Activated CD8-positive, alpha-beta T cell treated with anti-CD3 and anti-CD28 coated beads, Interleukin-2, amount 10 ng/mL, durations not matched to agents 7 days and 5 days (primary cell): ENCODE measurements at regions of chr1 and their contacts with region 1.

Region 1: GRCh38 chr1:111197598-111198284 is 2.7 kb downstream of the DENND2D start:
- DNase-seq: peak; percentile 76
- ATAC-seq: peak; percentile 46
- H3K4me3 Mint-ChIP-seq: peak overlapping the region; percentile 99
- H3K27ac Mint-ChIP-seq: peak overlapping the region; percentile 99
- H3K4me1 Mint-ChIP-seq: peaks cover 62% of the 10 kb centered on the region
- H3K27me3 Mint-ChIP-seq: no peaks in the 10 kb centered on the region

Region 2: GRCh38 chr1:111183308-111184069 is 14.3 kb before region 1 on chr1:
- CTCF ChIA-PET with region 1: interaction called, 24 read pairs
- POLR2A ChIA-PET with region 1: interaction called, 32 read pairs
- DNase-seq: no peak
- ATAC-seq: no peak
- H3K4me3 Mint-ChIP-seq: no peak overlapping the region
- H3K27ac Mint-ChIP-seq: peak overlapping the region; percentile 56
- H3K4me1 Mint-ChIP-seq: peaks cover 35% of the 10 kb centered on the region
- H3K27me3 Mint-ChIP-seq: no peaks in the 10 kb centered on the region

Region 3: GRCh38 chr1:111227851-111228747 is 30.4 kb after region 1 on chr1:
- CTCF ChIA-PET with region 1: interaction called, 528 read pairs
- POLR2A ChIA-PET with region 1: interaction called, 23 read pairs
- DNase-seq: no peak
- ATAC-seq: no peak
- H3K4me3 Mint-ChIP-seq: peak overlapping the region; percentile 16
- H3K27ac Mint-ChIP-seq: peak overlapping the region; percentile 72
- H3K4me1 Mint-ChIP-seq: peaks cover 79% of the 10 kb centered on the region
- H3K27me3 Mint-ChIP-seq: no peaks in the 10 kb centered on the region